ENCODE measurements at regions of chr2 and their contacts with region 1.

Region 1: DNA sequence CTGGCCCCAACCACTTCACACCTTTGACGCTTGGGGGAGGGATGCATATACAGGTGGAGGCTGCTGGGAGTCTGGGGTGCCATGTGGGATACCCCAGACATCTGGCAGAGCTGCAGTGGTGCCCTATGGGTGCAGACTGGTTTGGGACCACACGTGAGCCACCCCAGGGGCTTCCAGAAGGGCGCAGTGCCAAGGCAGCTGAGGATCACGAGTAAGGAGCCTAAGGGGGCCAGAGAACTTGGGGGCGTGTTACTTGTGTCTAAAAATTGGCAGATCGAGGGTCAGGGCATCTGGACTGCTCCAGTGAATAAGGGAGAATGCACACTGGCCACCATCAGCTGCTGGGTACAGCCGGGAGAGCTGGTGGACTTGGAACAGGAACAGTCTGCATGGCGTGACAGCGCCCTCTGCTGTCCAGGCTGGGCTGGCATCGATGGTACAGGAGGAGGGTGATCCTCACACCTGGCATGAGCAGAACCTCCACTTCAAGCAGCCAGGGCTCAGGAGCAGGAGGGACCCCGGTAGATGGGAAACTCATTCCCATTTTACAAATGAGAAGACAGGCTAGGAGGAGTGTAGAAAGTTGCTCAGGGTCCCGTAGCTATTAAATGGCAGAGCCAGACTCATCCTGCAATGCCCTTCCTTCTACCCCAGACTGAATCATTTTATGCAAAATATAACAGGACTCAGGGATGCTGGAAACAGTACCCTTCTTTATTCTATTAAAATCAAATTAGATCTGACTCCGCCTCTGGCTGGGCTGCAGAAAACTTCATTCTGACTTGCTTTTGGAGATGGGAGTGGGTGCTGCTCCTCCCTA is 60.4 kb downstream of the ATOH8 start:
- DNase-seq: peak; percentile 64 to 88
- H3K4me3 ChIP-seq: no peak overlapping the region
- H3K27ac ChIP-seq: no peak overlapping the region
- H3K4me1 ChIP-seq: no peaks in the 10 kb centered on the region
- H3K27me3 ChIP-seq: no peaks in the 10 kb centered on the region
- CTCF ChIP-seq: peak; percentile 95

Region 2: DNA sequence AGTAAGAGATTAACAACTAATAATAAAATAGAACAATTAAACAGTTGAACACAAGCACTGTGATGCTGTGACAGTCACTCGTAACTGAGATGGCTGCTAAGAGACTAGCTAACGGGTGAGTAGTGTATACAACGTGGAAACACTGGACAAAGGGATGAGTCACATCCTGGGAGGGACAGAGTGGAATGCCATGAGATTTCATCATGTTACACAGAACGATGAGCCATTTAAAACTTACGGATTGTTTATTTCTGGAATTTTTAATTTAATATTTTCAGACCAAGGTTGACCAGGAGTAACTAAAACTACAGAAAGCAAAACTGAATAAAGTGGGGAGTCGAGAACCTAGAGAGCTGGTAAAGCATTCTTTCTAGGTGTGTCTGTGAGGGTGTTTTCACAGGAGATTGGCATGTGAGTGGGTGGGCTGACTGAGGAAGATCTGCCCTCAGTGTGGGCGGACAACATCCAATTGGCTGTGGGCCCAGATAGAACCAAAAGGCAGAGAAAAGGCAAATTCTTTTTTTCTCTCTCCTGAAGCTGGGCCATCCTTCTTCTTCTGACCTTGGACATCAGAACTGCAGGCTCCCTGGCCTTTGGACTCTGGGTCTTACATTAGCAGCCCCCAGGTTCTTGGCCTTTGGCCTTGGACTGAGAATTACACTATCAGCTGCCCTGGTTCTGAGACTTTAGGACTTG is 894.2 kb before region 1 on chr2:
- CTCF ChIA-PET with region 1: no interaction called
- POLR2A ChIA-PET with region 1: no interaction called
- intact Hi-C with region 1: no loop called
- DNase-seq: peak; percentile 56 to 88
- H3K4me3 ChIP-seq: peak overlapping the region; percentile 27; the same call in 1 of the 2 replicates
- H3K27ac ChIP-seq: peak overlapping the region; percentile 93
- H3K4me1 ChIP-seq: peaks cover 17% of the 10 kb centered on the region
- H3K27me3 ChIP-seq: no peaks in the 10 kb centered on the region
- CTCF ChIP-seq: no peak

Region 3: GRCh38 chr2:85642725-85643124 is 171.5 kb before region 1 on chr2:
- CTCF ChIA-PET with region 1: interaction called, 7 read pairs
- POLR2A ChIA-PET with region 1: no interaction called
- intact Hi-C with region 1: loop called (anchors 1 kb)
- DNase-seq: no peak
- H3K4me3 ChIP-seq: no peak overlapping the region
- H3K27ac ChIP-seq: 0 out of 2 replicates have a peak overlapping the region, but pooled peaks have one; percentile 6
- H3K4me1 ChIP-seq: no peaks in the 10 kb centered on the region
- H3K27me3 ChIP-seq: no peaks in the 10 kb centered on the region
- CTCF ChIP-seq: no peak

Region 4: DNA sequence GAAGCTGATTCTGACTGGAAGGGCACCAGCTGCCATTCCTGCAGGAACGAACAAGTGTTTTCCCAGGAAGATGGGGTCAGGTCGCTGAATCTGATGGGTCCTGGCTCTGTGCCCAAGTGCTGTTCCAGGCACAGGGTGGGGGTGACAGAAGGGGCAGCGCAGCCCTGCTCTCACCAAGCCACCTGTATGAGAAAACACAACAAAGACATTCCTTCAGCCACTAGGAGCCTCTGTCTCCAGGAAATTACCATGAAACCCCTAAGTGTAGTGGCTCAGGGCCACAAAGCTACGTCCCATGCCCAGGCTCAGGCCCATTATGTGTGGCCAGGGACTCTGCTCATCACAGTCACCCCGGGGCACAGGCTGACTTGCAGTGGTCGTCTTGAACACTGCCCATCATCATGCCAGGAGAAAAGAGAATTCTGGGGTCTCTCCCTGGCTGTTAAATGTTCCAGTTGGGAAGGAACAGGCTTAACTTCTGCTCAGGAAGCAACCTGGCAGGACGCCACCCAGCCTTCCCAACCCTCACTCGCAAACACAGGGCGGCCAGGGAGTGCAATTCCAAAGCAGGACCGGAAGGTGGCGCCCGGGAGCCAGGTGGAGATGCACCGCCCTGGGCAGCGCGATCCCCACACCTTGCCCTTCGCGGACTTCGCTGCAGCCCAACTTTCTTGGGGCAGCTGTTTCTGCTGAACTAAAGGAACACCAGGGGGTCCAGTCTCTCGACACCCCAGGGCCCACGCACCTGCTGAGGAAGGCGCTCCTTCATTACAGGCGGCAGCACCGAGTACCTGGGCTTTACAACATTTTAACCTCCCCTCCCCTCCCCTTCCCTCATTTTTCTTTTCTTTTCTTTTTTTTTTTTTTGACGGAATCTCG is 135.2 kb before region 1 on chr2:
- CTCF ChIA-PET with region 1: no interaction called
- POLR2A ChIA-PET with region 1: no interaction called
- intact Hi-C with region 1: loop called (anchors 1 kb)
- DNase-seq: peak; percentile 60 to 89
- H3K4me3 ChIP-seq: peak overlapping the region; percentile 41; the same call in 1 of the 2 replicates
- H3K27ac ChIP-seq: peak overlapping the region; percentile 99; the same call in 1 of the 2 replicates
- H3K4me1 ChIP-seq: peaks cover 38% of the 10 kb centered on the region
- H3K27me3 ChIP-seq: no peaks in the 10 kb centered on the region
- CTCF ChIP-seq: peak; percentile 97

Region 5: DNA sequence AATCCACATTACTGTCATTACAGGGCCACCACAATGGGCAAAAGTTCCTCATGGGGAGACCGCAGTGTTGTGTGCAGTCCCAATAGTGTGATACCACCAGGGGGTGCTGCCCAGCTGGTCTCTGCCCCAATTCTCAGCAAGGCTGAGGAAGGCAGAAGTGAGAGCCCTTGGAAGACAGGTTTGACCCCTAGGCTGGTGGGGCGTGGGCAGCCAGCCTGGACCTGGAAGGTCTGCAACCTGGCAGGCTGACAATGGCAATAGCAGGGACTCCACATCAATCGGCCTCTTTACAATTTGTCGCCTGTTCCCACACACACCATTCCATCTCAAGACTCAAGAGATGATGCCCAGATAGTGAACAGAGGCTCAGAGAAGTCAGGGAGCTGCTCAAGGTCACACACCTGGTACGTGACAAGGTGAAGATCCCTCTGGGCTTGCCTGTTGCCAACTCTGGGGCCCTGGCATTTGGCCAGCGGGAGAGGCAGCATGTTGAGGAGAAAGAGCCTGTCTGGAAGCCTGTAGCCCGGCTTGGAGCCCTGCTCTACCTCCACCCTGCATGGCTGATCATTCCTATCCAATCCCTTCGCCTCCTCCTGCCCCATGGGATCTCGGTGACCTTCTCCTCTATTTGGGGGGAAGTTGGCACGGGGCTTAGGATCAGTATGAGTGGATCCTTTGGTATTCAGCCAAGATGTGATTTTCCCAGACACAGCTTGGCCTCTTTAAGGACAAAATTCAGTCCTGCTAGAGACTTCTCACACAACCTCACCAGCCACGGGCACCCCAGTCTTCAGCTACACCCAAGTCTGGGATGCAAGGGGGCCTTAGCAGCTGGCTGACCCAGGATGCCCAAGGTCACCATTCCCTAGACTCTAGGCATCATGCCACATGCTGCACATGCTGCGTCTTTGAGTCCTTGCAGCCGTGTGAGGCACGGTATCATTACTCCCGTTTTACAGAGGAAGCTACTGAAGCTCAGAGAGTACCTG is 63.3 kb before region 1 on chr2:
- CTCF ChIA-PET with region 1: interaction called, 6 read pairs
- POLR2A ChIA-PET with region 1: no interaction called
- intact Hi-C with region 1: loop called (anchors 1 kb)
- DNase-seq: peak in 1 of 2 experiments; percentile 66
- H3K4me3 ChIP-seq: no peak overlapping the region
- H3K27ac ChIP-seq: no peak overlapping the region
- H3K4me1 ChIP-seq: no peaks in the 10 kb centered on the region
- H3K27me3 ChIP-seq: peaks cover 81% of the 10 kb centered on the region
- CTCF ChIP-seq: peak; percentile 83

Region 6: DNA sequence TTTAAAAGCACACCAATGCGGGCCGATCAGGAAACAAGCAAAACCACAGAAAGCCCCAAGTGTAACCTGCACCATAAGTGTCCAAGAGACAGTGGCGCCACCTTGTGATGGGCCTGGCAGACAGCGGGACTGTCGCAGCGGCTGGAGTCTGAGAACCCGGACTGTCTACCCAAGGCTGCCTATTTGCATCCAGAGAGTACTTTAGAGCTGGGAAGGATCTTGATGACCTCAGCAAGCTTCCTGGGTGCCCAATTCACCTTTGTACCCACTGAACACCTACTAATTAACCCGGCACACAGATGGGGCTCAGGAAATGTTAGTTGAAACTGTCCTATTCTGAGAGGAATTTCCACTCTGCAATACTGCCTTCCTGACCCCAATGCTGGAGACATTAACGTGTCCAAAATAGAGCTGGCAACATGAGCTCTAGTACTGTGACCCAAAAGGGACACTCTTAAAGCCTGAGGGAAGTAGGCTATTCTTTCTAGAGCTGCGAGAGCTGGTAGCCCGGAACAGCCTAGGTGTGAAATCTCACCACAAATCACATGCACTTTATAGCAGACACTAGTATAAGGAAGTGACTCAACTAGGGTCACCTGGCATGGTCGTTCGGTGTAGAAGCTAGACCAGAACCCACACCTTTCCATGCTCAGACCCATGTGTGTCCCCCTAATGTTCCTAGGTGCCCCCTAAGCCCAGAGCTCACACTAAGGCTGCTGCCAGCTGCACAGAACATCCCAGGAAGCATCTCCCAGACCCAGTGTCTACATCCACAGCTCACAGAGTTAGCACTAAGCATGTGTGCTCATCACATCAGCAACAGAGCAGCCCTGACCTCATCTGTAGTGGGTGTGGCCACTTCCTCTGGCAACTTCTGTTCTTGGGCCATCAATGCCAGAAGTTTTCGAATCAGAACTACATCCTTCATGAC is 266.1 kb after region 1 on chr2:
- CTCF ChIA-PET with region 1: interaction called, 10 read pairs
- POLR2A ChIA-PET with region 1: no interaction called
- intact Hi-C with region 1: no loop called
- DNase-seq: peak in 1 of 2 experiments; percentile 62
- H3K4me3 ChIP-seq: no peak overlapping the region
- H3K27ac ChIP-seq: no peak overlapping the region
- H3K4me1 ChIP-seq: no peaks in the 10 kb centered on the region
- H3K27me3 ChIP-seq: no peaks in the 10 kb centered on the region
- CTCF ChIP-seq: peak; percentile 76